ENCODE measurements at regions of chr6 and their contacts with region 1.

Region 1: DNA sequence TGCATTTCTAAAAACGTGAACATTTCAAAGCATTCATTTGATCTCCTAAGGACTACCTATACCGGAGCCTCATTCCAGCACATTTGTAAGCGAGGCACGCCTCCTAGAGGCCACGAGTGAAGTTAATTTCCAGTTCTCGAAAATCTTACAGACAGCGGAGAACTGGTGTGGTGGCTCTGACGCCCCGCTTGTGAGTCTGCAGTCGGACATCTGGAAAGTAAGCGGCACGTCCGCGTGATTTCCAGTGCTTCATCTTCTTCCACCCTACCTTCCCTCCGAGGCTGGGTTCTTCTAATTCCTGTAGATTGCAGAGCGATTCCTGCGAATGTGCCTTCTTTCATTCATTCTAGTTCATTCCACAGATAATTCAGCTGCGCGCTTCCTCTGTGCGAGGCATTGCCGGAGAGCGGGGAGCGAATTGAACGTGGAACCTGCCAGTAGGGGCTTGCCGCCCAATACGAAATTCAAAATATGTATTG is 810 bp upstream of the PRIM2 start:
- DNase-seq: peak; percentile 77
- H3K4me3 Mint-ChIP-seq: peak overlapping the region; percentile 99
- H3K27ac Mint-ChIP-seq: peak overlapping the region; percentile 94
- H3K4me1 Mint-ChIP-seq: peaks cover 36% of the 10 kb centered on the region
- H3K27me3 Mint-ChIP-seq: peaks cover 18% of the 10 kb centered on the region

Region 2: GRCh38 chr6:56708810-56709597 is 607.6 kb before region 1 on chr6:
- intact Hi-C with region 1: loop called (anchors 2 kb)
- DNase-seq: no peak
- H3K4me3 Mint-ChIP-seq: no peak overlapping the region
- H3K27ac Mint-ChIP-seq: no peak overlapping the region
- H3K4me1 Mint-ChIP-seq: no peaks in the 10 kb centered on the region
- H3K27me3 Mint-ChIP-seq: no peaks in the 10 kb centered on the region

Region 3: DNA sequence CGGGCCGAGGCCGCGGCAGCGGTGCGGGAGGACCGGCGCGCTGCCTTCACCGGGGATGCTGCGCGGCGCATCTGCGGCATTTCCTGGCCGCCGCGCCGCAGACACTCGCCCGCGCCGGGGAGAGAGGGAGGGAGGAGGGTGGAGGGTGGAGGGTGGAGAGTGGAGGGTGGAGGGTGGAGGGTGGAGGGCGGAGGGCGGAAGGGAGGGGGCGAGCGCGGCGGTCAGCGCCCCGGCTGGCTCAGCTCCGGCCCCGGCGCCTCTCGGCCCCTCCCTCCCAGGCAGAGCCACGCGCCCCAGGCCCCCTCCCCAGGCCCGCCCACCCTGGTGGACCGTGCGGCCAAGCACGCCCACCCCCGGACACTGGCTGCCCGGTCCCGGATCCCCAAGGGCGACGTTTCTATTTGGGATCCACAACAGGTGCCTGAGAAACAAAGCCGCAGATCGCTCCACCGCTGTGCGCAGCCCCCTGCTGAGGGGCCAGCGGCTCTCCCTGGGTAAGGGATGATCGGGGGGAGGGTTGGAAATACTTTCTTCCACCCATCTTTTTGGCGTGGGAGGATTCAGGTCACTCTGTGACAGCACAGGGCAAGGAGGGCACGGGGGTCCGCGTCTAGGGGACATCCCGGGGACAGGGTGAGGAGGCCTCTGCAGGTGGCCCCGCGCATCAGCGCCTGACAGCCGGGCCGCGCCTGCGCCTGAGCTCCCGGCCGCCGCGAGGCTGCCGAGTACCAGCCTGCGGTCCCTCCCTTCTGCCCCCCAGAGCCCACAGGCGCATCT is 472.9 kb before region 1 on chr6:
- intact Hi-C with region 1: no loop called
- DNase-seq: peak; percentile 57
- H3K4me3 Mint-ChIP-seq: peak overlapping the region; percentile 78
- H3K27ac Mint-ChIP-seq: peak overlapping the region; percentile 32
- H3K4me1 Mint-ChIP-seq: peaks cover 9% of the 10 kb centered on the region
- H3K27me3 Mint-ChIP-seq: peaks cover 52% of the 10 kb centered on the region

Region 4: DNA sequence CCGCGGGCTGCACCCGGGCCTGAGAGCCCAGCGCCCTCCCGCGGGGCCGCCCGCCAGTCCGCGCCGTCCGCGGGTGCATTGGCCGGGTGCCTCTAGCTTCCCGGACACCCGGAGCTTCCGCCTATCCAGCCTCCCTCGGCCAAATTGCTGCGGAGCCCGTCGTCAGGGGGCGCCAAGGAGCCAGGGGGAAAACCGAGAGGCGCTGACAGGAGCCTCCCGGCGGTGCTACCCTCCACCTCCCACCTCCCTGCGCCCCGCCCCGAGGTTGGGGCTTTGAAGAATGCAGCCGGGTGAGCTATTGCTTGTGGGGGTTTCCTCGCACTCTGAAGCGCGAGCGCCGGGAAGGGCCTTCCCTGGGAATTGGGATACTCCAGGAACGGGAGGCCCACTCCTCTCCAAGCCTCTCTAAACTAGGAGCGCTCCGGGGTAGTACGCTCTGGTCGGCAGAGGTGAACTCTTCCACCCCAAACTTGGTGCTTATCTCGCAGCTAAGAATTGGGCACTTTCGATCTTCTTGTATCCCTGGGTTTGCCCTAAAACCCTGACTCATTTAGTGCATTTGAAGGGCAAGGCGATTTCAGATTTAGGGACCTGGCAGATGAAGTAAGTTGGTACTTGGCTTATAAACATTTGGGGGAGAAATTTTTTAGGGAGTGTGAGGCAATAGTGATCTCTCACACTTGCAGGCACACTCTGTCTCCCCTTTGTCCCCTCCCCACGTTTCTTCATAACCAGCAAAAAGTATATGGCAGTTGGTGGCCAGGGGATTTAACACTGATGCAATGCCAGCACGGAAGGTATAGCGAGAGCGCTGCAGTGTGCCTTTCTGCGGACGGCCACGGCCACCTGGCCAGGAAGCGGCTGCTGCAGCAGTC is 361.2 kb before region 1 on chr6:
- intact Hi-C with region 1: loop called (anchors 1 kb)
- DNase-seq: peak; percentile 62
- H3K4me3 Mint-ChIP-seq: peak overlapping the region; percentile 84
- H3K27ac Mint-ChIP-seq: peak overlapping the region; percentile 70
- H3K4me1 Mint-ChIP-seq: peaks cover 19% of the 10 kb centered on the region
- H3K27me3 Mint-ChIP-seq: peaks cover 57% of the 10 kb centered on the region

Region 5: DNA sequence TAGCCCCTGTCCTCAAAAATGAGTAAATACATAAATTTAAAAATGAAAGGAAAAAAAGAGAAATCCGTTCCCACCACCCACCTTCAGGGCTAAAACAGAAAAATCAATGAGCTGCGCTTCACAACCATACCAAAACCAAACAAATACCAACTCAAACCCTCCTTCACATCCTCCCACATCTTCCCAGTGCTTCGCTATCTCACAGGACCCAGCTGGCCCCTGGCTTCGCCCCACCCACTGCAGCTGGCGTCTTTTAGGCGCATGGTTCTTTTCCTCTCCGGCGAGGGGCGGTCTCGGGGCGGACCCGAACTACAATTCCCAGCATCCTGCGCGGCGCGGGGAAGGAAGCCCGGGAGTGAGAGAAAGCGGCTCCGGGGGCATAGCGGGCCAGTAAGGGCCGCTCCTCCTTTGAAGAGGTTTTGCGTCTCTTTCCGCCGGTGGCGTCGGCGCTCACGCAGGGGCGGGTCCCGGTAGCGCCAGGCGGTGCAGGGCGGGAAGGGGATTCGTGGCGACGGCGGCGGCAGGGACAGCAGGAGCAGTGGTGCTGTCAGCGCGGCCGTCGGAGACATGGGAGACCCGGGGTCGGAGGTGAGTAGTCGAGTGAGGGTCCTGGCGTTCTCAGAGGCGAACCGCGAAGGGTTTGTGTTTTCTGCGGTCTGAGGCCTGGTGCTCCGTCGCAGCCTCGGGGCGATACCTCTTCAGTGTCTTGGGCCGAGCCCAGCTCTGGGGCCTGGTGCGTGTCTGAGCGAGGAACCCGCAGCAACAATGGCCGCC is 226.7 kb before region 1 on chr6 and contains the start of gene ZNF451:
- intact Hi-C with region 1: loop called (anchors 1 kb)
- DNase-seq: peak; percentile 95
- H3K4me3 Mint-ChIP-seq: peak within 1 kb of the TSS; percentile 88
- H3K27ac Mint-ChIP-seq: peak within 1 kb of the TSS; percentile 72
- H3K4me1 Mint-ChIP-seq: peaks cover 35% of the 10 kb centered on the region
- H3K27me3 Mint-ChIP-seq: no peaks in the 10 kb centered on the region
- total RNA-seq, gene ZNF451: 58.1 and 64.4 TPM in 2 replicates

Region 6: DNA sequence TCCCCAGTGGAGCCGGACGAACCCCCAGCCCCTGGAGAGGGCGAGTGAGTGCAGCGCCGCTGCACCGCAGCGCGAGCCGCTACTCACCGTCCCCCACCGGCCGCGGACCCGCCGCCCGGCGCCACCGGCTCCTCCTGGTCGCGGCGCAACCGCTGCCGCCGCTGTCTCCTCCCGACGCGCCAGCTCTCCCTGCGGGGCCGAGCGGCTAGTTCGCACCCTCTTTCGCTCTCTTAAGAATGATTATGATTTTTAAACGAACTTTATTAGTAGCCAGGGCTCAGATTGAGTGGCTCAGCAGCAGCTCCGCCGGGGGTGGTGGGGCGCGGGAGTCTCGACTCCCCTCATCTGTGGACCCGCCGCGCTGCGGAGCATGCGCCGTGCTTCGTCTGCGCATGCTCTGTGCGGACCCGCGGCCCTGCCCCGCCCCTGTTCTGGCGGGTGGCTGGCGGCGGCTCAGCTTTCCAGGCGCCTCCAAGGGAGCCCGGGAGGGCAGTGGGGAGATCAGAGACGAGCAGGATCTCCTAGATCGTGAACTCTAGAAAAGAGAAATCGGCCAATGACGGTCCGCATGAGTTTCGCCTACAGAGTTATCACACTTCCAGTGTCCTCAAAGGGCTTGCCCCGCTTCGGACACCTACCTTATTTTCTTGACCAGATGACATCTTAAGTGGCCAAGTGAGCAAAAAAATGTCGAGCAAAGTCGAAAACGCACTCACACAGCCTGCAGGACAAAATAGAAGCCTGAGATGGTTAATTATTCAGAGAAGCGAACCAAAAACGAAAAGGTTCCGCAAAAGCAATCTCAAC is 94.5 kb before region 1 on chr6 and contains the start of gene RAB23:
- intact Hi-C with region 1: loop called (anchors 1 kb)
- DNase-seq: peak; percentile 85
- H3K4me3 Mint-ChIP-seq: peak within 1 kb of the TSS; percentile 94
- H3K27ac Mint-ChIP-seq: peak within 1 kb of the TSS; percentile 94
- H3K4me1 Mint-ChIP-seq: peaks cover 39% of the 10 kb centered on the region
- H3K27me3 Mint-ChIP-seq: peaks cover 30% of the 10 kb centered on the region
- total RNA-seq, gene RAB23: 3.0 and 3.8 TPM in 2 replicates

Region 7: GRCh38 chr6:57257911-57258541 is 58.6 kb before region 1 on chr6:
- intact Hi-C with region 1: no loop called
- DNase-seq: no peak
- H3K4me3 Mint-ChIP-seq: no peak overlapping the region
- H3K27ac Mint-ChIP-seq: no peak overlapping the region
- H3K4me1 Mint-ChIP-seq: no peaks in the 10 kb centered on the region
- H3K27me3 Mint-ChIP-seq: no peaks in the 10 kb centered on the region

Measured in activated T-helper 1 cell treated with anti-CD3 and anti-CD28 coated beads, Interleukin-12 subunit alpha, Interleukin-12 subunit beta, Interleukin-2, Interleukin-4 antibody, amounts not matched to agents 30 ng/mL and 10 ng/mL and 1 ng/mL, durations not matched to agents 14 hours and 24 hours and 36 hours (primary cell).